ENCODE measurements at regions of chr2 and their contacts with region 1.

Region 1: GRCh38 chr2:120252225-120253021 is at the start of gene RALB:
- DNase-seq: peak; percentile 98
- ATAC-seq: peak; percentile 89 to 90
- H3K4me3 ChIP-seq: peak within 1 kb of the TSS; percentile 67 to 87 (median 73)
- H3K27ac ChIP-seq: peak within 1 kb of the TSS; percentile 78 to 89 (median 82)
- H3K4me1 ChIP-seq: peaks cover 9 to 38% of the 10 kb centered on the region in 2 donors
- H3K27me3 ChIP-seq: no peaks in the 10 kb centered on the region
- CTCF ChIP-seq: no peak
- POLR2A ChIP-seq: peak; percentile 62 to 75
- total RNA-seq, gene RALB: 20.1 to 45.0 (median 30.4) TPM

Region 2: DNA sequence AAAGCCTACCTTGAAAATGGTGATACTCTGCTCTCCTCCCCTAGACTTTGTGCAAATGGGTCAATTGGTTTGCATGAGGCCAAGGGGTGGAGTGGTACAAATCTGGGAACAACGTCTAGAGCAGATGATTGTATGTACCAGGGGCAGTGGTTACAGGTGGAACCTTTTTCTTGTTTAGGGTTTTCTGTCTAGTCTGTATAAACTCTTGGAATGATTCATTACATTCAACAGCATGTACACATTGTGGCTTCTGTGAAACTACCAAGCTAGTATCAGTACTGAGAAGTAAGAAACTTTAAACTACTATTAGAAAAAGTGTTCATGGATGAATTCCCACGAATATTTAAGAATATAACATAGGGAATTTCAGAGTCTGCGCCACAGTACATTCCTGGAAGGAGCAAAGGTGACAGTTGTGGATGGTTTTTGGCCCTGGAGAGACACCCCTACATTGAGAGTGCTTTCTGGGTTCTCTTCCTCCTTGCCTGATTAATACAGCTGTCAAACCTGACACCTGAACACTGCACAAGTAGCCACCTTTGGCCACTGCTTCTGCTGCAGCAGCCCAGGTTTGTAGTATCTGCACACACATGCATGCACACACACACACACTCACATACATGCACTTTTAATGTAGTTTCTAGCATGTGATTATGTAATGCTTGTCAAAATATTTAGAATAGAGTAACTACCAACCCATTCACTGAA is 678.2 kb before region 1 on chr2:
- in situ Hi-C with region 1: no loop called
- intact Hi-C with region 1: no loop called
- DNase-seq: no peak
- ATAC-seq: no peak
- H3K4me3 ChIP-seq: no peak overlapping the region
- H3K27ac ChIP-seq: no peak overlapping the region
- H3K4me1 ChIP-seq: no peaks in the 10 kb centered on the region
- H3K27me3 ChIP-seq: no peaks in the 10 kb centered on the region
- CTCF ChIP-seq: no peak
- POLR2A ChIP-seq: no peak

Region 3: DNA sequence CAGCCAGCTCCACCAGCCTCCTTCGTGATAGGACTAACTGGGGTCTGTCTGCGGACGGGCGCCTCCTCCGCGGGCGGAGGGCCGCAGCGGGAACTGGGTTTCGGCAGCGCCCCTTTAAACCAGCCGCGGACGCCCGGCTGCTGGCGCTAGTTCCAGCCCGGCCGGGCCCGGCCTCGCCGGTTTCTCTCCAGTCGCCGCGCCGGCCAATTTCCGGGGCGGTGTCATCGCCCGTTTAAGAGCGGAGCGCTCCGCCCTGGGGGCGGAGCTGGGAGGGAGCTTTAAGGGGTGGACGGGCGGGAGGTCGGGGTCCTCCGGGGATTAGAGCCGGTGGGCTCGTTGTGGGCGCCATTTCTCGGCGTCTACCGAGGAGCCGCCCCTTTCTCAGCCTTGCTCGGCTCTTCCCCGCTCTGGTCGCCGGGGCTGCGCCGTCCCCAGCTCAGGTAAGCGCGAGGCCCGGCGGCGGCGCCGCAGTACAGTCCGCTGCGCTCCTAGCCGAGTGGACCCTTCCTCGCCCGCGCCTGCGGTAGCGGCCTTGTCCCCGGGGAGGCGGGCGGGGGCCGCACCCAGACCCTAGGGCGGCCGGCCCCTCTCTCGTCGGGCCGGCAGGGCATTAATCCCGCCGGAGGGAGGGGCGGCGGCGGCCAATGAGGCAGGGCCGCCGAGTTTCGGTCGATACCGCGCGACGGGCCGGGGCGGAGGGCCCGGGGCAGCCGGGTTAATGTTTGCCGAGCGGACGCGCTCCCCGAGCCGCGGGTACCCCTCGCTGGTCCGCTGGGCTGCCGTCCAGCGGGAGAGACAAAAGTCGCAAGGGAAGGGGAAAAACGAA is 239.4 kb before region 1 on chr2 and contains the start of gene EPB41L5:
- in situ Hi-C with region 1: no loop called
- intact Hi-C with region 1: loop called (anchors 1 kb)
- DNase-seq: peak; percentile 84 to 91
- ATAC-seq: peak; percentile 92 to 94
- H3K4me3 ChIP-seq: peak within 1 kb of the TSS; percentile 88 to 98 (median 95)
- H3K27ac ChIP-seq: peak within 1 kb of the TSS; percentile 89 to 97 (median 92)
- H3K4me1 ChIP-seq: peaks cover 13 to 25% of the 10 kb centered on the region in 2 donors
- H3K27me3 ChIP-seq: no peaks in the 10 kb centered on the region
- CTCF ChIP-seq: peak in 1 of 5 experiments; percentile 15
- POLR2A ChIP-seq: peak; percentile 84 to 92
- total RNA-seq, gene EPB41L5: 8.3 to 41.1 (median 12.7) TPM

Region 4: DNA sequence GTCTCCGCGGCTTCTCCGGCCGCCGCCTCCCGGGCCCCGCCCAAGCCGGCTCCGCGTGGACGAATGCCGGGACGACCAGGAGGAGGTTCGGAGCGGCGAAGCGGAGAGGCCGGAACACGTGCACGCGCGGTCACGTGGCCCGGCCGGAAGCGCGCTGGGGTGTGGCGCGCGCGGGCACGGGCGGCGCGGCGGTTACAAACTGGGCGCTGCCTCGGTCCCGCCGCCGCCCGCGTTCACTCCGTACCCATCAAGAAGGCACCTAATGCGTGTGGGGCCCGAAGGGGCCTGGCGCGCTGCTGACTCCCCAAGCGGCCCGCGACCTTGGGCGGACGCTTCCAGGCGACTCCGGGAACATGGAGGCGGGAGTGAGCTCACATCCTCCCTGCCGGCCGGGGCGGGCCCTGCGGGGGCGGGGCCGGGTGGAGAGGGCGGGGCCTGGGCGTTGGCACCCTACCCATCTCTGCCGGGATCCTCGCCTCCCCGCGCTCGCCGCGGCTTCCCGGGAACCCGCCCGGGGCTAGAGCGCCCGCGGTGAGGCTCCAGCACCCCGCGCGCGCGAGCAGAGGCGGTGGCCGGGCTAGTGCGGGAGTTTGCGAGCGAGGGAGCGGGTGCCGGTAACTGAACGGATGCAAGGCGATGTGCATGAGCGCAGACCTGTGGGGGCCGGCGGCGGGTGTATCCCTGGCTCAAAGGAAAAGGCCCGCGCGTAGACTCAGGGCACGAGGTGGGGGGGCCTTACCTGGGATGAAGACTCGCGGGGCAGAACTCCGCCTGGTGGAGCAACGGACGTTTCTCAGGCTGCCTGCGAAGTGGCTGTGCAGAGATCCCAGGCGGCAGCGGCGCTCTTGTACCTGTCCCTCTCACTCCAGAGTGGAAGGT is 29.1 kb before region 1 on chr2 and contains the start of gene TMEM185B:
- in situ Hi-C with region 1: no loop called
- intact Hi-C with region 1: loop called (anchors 1 kb)
- DNase-seq: peak; percentile 74 to 86
- ATAC-seq: peak; percentile 96 to 97
- H3K4me3 ChIP-seq: peak within 1 kb of the TSS; percentile 70 to 78 (median 70)
- H3K27ac ChIP-seq: peak within 1 kb of the TSS; percentile 86 to 96 (median 90)
- H3K4me1 ChIP-seq: peaks cover 25% of the 10 kb centered on the region in 2 donors
- H3K27me3 ChIP-seq: no peaks in the 10 kb centered on the region
- CTCF ChIP-seq: peak in 3 of 5 experiments; percentile 20 to 41 (median 26)
- POLR2A ChIP-seq: peak; percentile 63 to 71
- total RNA-seq, gene TMEM185B: 10.8 to 23.5 (median 15.4) TPM